Aorta (tissue), 5 donors: ENCODE measurements at regions of chr15 and their contacts with region 1.

Region 1: DNA sequence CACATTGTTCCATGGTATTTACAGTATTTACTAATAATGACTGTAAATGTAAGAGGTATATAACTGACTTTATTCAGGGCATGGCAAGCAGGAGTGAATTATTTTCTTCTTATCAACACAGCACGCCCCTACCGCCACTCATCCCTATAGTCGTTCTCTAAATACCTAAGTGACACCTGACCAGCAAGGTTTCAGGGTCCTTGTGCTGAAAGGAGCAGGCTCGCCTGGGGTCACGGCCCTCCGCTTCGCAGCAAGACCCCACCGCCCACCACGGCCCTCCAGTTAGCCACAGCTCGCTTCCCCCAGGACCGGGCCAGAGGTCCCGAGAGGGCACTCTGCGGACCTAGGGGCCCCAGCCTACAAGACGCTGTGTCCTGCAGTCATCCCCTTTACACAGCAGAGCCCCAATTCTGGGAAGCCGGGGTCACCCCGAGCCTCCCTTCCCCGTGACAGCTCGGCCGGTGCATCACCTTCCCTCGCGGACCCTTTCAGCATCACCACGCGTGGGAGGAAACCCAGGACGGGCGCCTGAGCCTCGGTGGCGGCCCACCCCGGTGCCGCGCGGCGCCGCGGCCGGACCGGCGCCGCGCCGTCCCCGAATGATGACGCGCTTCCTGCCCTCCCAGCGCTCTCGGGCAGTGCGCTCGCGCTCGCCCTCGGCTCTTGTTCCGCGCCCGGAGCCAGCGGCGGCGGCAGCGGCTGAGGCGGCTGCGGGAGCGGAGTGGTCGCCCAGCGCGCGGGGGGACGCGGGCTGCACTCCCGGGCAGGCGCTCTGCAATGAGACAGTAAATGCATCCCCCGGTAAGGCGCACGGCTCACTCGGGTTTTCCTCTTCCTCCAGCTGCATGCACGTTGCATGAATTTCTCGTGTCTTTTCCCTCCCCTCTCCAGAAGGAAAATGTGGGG is 225.1 kb upstream of the C2CD4B start:
- DNase-seq: peak; percentile 81 to 91
- ATAC-seq: peak; percentile 92
- H3K4me3 ChIP-seq: peak within 1 kb of the TSS; percentile 55 to 85
- H3K27ac ChIP-seq: peak within 1 kb of the TSS; percentile 36 to 41
- H3K4me1 ChIP-seq: peaks cover 0 to 2% of the 10 kb centered on the region in 2 donors
- H3K27me3 ChIP-seq: no peaks in the 10 kb centered on the region

Region 2: GRCh38 chr15:62357431-62357830 is 32.7 kb before region 1 on chr15:
- intact Hi-C with region 1: no loop called
- DNase-seq: no peak
- ATAC-seq: no peak
- H3K4me3 ChIP-seq: no peak overlapping the region
- H3K27ac ChIP-seq: no peak overlapping the region
- H3K4me1 ChIP-seq: no peaks in the 10 kb centered on the region
- H3K27me3 ChIP-seq: peaks cover 0 to 1% of the 10 kb centered on the region in 2 donors

Region 3: DNA sequence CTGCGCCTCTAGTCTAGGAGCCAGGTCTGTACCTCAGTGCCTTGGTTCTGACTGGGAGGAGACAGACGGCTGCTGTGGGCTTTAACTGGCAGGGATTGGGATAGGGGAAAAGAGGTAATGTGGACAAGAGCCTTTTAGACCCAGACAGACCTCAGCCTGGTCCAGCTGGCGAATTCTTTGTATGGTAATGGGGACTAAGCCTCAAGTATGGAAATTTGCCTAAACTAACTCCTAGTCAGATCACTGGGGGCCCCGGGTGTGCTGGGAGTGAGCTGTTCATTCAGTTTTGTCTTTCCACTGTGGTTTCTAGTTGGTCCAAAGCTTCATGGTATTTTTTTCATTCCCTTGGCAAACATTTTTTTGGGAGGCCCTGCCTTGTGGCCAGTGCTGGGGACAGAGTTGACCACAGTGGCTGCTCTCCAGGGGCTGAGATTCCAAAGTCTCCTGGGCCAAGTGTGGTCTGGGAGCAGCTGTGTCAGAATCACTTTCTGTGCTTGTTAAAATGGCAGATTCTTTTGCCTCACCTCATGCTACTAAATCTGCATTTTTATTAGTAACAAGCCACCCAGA is 36.3 kb after region 1 on chr15:
- intact Hi-C with region 1: loop called in 1 of 2 experiments (anchors 5 kb)
- DNase-seq: peak in 1 of 2 donors; percentile 65
- ATAC-seq: peak; percentile 61
- H3K4me3 ChIP-seq: no peak overlapping the region
- H3K27ac ChIP-seq: peak overlapping the region; percentile 33 to 70
- H3K4me1 ChIP-seq: peaks cover 4 to 11% of the 10 kb centered on the region in 2 donors
- H3K27me3 ChIP-seq: no peaks in the 10 kb centered on the region

Region 4: GRCh38 chr15:62495670-62496614 is 105.8 kb after region 1 on chr15:
- intact Hi-C with region 1: loop called in 1 of 2 experiments (anchors 2 kb)
- DNase-seq: peak in 1 of 2 donors; percentile 74
- ATAC-seq: peak; percentile 88
- H3K4me3 ChIP-seq: no peak overlapping the region
- H3K27ac ChIP-seq: peak overlapping the region in 1 of 2 donors; percentile 80
- H3K4me1 ChIP-seq: peaks cover 3 to 4% of the 10 kb centered on the region in 2 donors
- H3K27me3 ChIP-seq: no peaks in the 10 kb centered on the region

Region 5: GRCh38 chr15:62618432-62618831 is 228.3 kb after region 1 on chr15:
- intact Hi-C with region 1: loop called in 1 of 2 experiments (anchors 10 kb)
- DNase-seq: no peak
- ATAC-seq: peak; percentile 71
- H3K4me3 ChIP-seq: no peak overlapping the region
- H3K27ac ChIP-seq: peak overlapping the region in 1 of 2 donors; percentile 52
- H3K4me1 ChIP-seq: peaks cover 6 to 7% of the 10 kb centered on the region in 2 donors
- H3K27me3 ChIP-seq: no peaks in the 10 kb centered on the region

Region 6: DNA sequence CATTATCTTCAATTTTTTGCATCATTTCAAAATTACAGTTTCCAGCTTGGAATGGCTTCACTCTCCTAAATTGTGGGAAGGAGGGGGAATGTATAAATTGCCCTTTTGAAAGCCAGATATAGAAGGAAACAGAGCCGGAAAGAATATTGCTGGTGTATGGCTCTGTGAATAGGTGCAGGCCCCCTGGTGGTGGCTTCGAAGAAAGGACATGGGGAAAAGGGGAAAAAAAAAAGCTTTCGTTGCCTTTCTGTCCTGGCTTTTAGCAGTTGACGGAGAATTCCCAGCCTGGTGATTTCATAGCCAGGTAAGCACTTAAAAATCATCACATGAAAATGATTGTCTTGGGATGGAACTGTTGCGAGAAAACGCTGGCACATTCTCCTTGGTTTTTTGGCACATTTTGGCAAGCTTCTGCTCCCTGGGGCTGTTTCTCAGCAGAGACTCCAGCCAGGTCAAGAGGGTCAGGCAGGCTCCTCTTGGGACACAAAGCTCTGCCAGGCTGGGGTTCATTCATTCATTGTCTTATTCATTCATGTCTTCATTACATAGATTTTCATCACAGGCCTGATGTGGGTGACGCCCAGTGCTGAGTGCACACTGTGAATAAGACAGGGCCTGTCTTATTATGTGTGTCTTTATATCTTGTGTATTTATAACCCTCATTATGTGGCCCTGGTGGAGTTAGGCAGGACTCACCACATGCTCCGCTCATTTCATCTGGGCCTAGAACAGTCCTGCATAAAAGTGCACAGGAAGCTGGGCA is 352.5 kb after region 1 on chr15:
- intact Hi-C with region 1: loop called in 1 of 2 experiments (anchors 10 kb)
- DNase-seq: peak; percentile 76 to 89
- ATAC-seq: peak; percentile 86
- H3K4me3 ChIP-seq: no peak overlapping the region
- H3K27ac ChIP-seq: peak overlapping the region in 1 of 2 donors; percentile 76
- H3K4me1 ChIP-seq: no peaks in the 10 kb centered on the region
- H3K27me3 ChIP-seq: no peaks in the 10 kb centered on the region